ENCODE measurements at regions of chr19 and their contacts with region 1.

Region 1: DNA sequence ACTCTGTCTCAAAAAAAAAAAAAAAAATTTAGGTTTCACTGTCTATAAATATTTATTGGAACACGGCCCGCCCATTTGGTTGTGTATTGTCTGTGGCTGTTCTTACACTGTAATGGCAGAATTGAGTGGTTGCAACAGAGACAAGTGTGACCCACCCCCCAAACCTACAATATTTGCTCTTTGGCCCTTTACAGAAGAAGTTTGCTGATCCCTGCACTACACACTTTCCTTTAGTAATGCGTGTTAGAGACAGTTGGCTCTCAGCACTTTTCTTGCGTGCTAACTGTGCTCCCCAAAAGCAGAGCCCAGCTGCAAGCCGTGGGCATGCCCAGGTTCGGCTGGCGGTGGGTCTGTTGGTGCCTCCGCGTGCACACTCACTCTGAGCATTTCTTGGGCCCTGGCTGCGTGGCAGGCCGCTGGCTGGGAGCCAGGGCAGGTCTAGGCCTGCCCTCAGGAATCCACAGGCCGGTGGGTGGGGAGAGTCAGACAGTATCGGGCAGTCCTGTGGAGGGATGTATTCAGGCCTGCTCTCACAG is 72.6 kb downstream of the SIPA1L3 start:
- DNase-seq: peak; percentile 66
- ATAC-seq: no peak
- H3K4me3 ChIP-seq: peak overlapping the region in 2 of 5 experiments; percentile 19 to 45
- H3K4me3 Mint-ChIP-seq: peak overlapping the region; percentile 65
- H3K27ac ChIP-seq: peak overlapping the region; percentile 89 to 92
- H3K27ac Mint-ChIP-seq: peak overlapping the region; percentile 94
- H3K4me1 ChIP-seq: peaks cover 79 to 99% of the 10 kb centered on the region in 2 donors
- H3K4me1 Mint-ChIP-seq: peaks cover 87% of the 10 kb centered on the region
- H3K27me3 ChIP-seq: no peaks in the 10 kb centered on the region
- H3K27me3 Mint-ChIP-seq: no peaks in the 10 kb centered on the region
- CTCF ChIP-seq: no peak

Region 2: GRCh38 chr19:37963190-37963936 is 16.3 kb before region 1 on chr19:
- CTCF ChIA-PET with region 1: interaction called, 5 read pairs
- POLR2A ChIA-PET with region 1: interaction called, 3 read pairs
- intact Hi-C with region 1: loop called (anchors 1 kb)
- DNase-seq: no peak
- ATAC-seq: no peak
- H3K4me3 ChIP-seq: no peak overlapping the region
- H3K4me3 Mint-ChIP-seq: peak overlapping the region; percentile 29
- H3K27ac ChIP-seq: peak overlapping the region; percentile 69 to 77
- H3K27ac Mint-ChIP-seq: peak overlapping the region; percentile 91
- H3K4me1 ChIP-seq: peaks cover 58 to 72% of the 10 kb centered on the region in 2 donors
- H3K4me1 Mint-ChIP-seq: peaks cover 71% of the 10 kb centered on the region
- H3K27me3 ChIP-seq: no peaks in the 10 kb centered on the region
- H3K27me3 Mint-ChIP-seq: no peaks in the 10 kb centered on the region
- CTCF ChIP-seq: no peak

Region 3: GRCh38 chr19:38033658-38034498 is 54.3 kb after region 1 on chr19:
- CTCF ChIA-PET with region 1: interaction called, 16 read pairs
- POLR2A ChIA-PET with region 1: interaction called, 22 read pairs
- intact Hi-C with region 1: loop called (anchors 1 kb)
- DNase-seq: peak; percentile 93
- ATAC-seq: peak; percentile 79
- H3K4me3 ChIP-seq: peak overlapping the region in 3 of 5 experiments; percentile 16 to 43 (median 36)
- H3K4me3 Mint-ChIP-seq: peak overlapping the region; percentile 86
- H3K27ac ChIP-seq: peak overlapping the region; percentile 84 to 93
- H3K27ac Mint-ChIP-seq: peak overlapping the region; percentile 99
- H3K4me1 ChIP-seq: peaks cover 63 to 87% of the 10 kb centered on the region in 2 donors
- H3K4me1 Mint-ChIP-seq: peaks cover 81% of the 10 kb centered on the region
- H3K27me3 ChIP-seq: no peaks in the 10 kb centered on the region
- H3K27me3 Mint-ChIP-seq: no peaks in the 10 kb centered on the region
- CTCF ChIP-seq: peak; percentile 65

Region 4: GRCh38 chr19:38079926-38080380 is 100.3 kb after region 1 on chr19:
- CTCF ChIA-PET with region 1: interaction called, 3 read pairs
- POLR2A ChIA-PET with region 1: interaction called, 3 read pairs
- intact Hi-C with region 1: loop called (anchors 5 kb)
- DNase-seq: peak; percentile 48
- ATAC-seq: peak; percentile 83
- H3K4me3 ChIP-seq: no peak overlapping the region
- H3K4me3 Mint-ChIP-seq: peak overlapping the region; percentile 33
- H3K27ac ChIP-seq: peak overlapping the region; percentile 41 to 64
- H3K27ac Mint-ChIP-seq: peak overlapping the region; percentile 88
- H3K4me1 ChIP-seq: peaks cover 18 to 23% of the 10 kb centered on the region in 2 donors
- H3K4me1 Mint-ChIP-seq: peaks cover 22% of the 10 kb centered on the region
- H3K27me3 ChIP-seq: no peaks in the 10 kb centered on the region
- H3K27me3 Mint-ChIP-seq: no peaks in the 10 kb centered on the region
- CTCF ChIP-seq: no peak

Region 5: DNA sequence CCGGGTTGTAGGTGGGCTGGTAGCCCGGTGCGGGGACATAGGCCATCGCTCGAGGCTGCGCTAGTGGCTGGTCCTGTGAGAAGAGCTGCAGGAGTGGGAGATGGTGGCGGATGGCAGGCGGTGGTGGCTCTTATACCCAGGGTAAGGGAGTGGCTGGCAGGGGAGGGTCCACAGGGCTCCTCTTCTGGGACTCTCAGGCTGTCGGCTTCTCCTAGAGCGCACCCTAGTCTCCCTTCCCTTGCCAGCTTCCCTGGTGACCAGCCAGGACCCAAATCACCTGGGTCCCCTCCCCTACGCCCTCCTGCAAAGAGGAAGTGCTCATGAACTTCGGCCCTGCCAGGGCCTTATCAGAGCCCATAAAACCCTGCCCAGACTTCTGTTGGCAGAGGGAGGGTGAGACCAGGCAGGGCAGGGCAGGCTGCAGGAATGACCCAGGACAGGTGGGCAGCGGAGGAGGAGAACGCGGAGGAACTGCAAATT is 833.3 kb after region 1 on chr19 and contains the start of gene LGALS4:
- CTCF ChIA-PET with region 1: no interaction called
- POLR2A ChIA-PET with region 1: no interaction called
- intact Hi-C with region 1: no loop called
- DNase-seq: no peak
- ATAC-seq: no peak
- H3K4me3 ChIP-seq: no peak within 1 kb of the TSS
- H3K4me3 Mint-ChIP-seq: no peak within 1 kb of the TSS
- H3K27ac ChIP-seq: no peak within 1 kb of the TSS
- H3K27ac Mint-ChIP-seq: peak within 1 kb of the TSS; percentile 32
- H3K4me1 ChIP-seq: no peaks in the 10 kb centered on the region
- H3K4me1 Mint-ChIP-seq: no peaks in the 10 kb centered on the region
- H3K27me3 ChIP-seq: no peaks in the 10 kb centered on the region
- H3K27me3 Mint-ChIP-seq: no peaks in the 10 kb centered on the region
- CTCF ChIP-seq: no peak
- total RNA-seq, gene LGALS4: 6.9 and 8.4 TPM in 2 replicates